ENCODE measurements at regions of chr19 and their contacts with region 1.

Region 1: DNA sequence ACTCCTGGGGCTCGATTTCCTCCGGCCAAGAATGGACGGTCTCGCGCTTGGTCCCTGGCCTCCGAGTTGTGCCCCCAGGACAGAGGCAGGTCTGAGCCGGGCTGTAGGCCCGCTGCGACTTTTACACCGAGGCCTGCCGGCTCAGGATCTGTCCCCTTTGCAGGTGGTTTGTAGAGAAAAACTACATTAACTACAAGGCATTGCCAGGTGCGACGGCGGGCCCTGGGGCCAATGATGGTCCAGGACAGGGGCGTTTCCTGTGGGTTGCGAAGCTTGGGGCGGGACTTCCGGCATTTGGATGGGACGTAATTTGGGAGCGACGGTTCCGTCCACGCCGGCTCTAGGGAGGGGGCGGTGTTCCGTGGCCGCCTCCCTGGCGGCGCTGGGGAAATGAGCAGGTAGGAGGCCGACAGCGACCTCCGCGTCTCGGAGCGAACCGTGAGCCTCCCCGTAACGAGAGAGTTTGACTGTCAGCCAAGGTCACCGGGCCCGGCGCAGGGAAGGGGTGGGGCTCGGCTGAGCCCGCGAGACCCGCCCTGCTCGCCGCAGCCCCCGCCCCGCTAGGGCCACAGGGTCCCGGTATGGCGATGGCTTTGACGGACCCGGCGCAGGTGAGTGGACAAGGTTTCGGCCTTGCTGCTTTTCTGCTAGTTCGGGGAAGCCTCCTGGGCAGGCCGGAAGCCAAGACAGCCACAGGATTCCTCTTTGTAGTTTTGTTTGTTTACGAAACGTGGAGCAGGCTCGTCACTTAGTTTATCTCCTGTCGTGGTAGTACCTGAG is at the start of gene ZNF805:
- DNase-seq: peak; percentile 93
- H3K4me3 Mint-ChIP-seq: peak within 1 kb of the TSS; percentile 92
- H3K27ac Mint-ChIP-seq: peak within 1 kb of the TSS; percentile 90
- H3K4me1 Mint-ChIP-seq: peaks cover 16% of the 10 kb centered on the region
- H3K27me3 Mint-ChIP-seq: no peaks in the 10 kb centered on the region
- total RNA-seq, gene ZNF805: 6.6 and 6.9 TPM in 2 replicates

Region 2: DNA sequence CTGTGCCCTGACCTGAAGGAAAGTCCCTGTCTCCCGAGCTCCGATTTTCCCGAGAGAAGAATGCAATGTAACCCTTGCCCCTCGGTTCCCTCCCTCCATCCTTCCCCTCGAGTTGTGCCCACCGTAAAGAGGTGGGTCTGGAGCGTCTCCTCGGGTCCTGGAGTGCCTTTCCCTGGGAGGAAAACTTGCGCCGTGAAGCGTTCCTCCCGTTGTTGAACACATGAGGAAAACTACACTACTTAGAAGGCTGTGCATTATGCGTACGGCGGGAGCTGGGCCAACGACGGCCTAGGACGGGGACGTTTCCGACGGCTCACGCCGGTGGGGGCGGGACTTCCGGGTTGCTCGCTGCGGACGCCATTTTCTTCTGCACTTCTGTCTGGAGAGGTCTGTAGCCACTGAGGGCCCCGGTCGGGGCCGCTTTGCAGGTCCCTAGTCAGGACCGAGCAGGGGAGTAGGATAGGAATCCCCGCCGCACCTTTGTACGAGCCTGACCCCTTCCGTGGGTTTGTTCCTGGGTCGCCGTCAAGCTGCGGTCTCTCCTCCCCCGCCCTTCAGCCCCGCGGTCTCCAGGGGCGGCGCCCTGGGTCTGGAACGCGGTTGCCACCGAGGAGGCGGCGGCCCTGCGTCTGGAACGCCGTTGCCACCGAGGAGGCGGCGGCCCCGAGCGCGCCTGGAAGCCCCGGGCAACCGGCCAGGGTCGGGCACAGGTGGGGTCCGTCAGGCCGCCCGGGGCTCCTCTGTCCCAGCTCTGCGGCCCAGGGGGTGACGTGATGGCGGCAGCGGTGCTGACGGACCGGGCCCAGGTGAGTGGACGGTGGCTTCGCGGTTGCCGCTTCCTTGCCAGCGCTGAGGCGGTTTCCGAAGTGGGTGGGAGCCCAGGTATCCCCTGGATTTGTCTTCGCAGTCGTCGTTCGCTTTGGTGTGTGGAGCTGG is 49.1 kb before region 1 on chr19 and contains the start of gene ZNF264:
- intact Hi-C with region 1: loop called (anchors 2 kb)
- DNase-seq: peak; percentile 84
- H3K4me3 Mint-ChIP-seq: peak within 1 kb of the TSS; percentile 91
- H3K27ac Mint-ChIP-seq: peak within 1 kb of the TSS; percentile 83
- H3K4me1 Mint-ChIP-seq: peaks cover 19% of the 10 kb centered on the region
- H3K27me3 Mint-ChIP-seq: no peaks in the 10 kb centered on the region
- total RNA-seq, gene ZNF264: 16.5 and 18.0 TPM in 2 replicates

Region 3: GRCh38 chr19:57279418-57280066 is 39.0 kb after region 1 on chr19:
- intact Hi-C with region 1: loop called (anchors 1 kb)
- DNase-seq: peak; percentile 73
- H3K4me3 Mint-ChIP-seq: peak overlapping the region; percentile 15
- H3K27ac Mint-ChIP-seq: no peak overlapping the region
- H3K4me1 Mint-ChIP-seq: peaks cover 21% of the 10 kb centered on the region
- H3K27me3 Mint-ChIP-seq: no peaks in the 10 kb centered on the region

Region 4: GRCh38 chr19:57320180-57321084 is 79.9 kb after region 1 on chr19 and contains the start of gene ZNF543:
- intact Hi-C with region 1: loop called (anchors 1 kb)
- DNase-seq: peak; percentile 89
- H3K4me3 Mint-ChIP-seq: peak within 1 kb of the TSS; percentile 85
- H3K27ac Mint-ChIP-seq: peak within 1 kb of the TSS; percentile 91
- H3K4me1 Mint-ChIP-seq: peaks cover 25% of the 10 kb centered on the region
- H3K27me3 Mint-ChIP-seq: peaks cover 11% of the 10 kb centered on the region
- total RNA-seq, gene ZNF543: 4.6 and 5.1 TPM in 2 replicates

Region 5: DNA sequence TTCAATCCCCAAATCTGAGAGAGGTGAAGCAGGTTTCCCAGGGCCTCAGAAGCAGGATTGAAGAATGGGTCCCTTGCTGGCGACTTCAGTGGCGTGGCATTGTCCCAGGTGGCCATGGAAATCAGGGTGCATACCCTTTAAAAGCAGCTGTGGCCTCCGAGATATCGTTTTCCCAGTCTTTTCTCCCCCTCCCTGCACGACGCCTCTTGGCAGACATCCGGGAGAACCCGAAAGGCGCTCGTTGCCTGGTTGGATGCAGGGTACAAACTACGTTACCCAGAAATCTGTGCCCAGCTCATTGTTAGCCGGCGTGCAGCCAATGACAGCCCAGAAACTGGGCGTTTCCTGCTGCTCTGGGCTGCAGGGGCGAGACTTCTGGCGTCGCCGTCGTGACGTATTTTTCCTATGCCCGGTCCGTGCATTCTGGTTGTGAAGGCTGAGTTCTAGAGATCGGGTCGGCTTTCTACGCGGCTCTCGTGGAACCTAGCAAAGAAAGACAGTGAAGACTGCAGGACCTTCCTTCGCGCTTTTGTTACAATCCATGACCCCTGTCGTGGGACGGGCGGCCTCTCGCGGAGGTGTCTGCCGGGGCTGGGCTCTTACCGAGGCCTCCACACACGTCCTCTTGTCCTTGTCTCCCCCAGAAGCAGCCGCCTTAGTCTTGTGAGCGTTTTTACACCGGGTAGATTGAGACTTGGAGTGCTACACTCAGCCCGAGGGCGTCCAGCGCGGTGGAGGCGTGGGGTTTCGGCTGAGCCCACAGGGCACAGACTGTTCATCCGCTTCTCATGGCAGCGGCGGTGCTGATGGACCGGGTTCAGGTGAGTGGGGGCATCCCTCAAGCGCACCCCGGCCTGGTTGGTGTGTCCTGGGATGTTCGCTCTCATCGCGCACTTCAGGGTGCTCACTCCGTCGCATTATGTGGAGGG is 110.6 kb after region 1 on chr19 and contains the start of gene ZNF304:
- intact Hi-C with region 1: loop called (anchors 1 kb)
- DNase-seq: peak; percentile 83
- H3K4me3 Mint-ChIP-seq: peak within 1 kb of the TSS; percentile 92
- H3K27ac Mint-ChIP-seq: peak within 1 kb of the TSS; percentile 86
- H3K4me1 Mint-ChIP-seq: peaks cover 25% of the 10 kb centered on the region
- H3K27me3 Mint-ChIP-seq: no peaks in the 10 kb centered on the region
- total RNA-seq, gene ZNF304: 5.2 and 6.5 TPM in 2 replicates